Caco-2 (cell line): ENCODE measurements at regions of chr11 and their contacts with region 1.

Region 1: DNA sequence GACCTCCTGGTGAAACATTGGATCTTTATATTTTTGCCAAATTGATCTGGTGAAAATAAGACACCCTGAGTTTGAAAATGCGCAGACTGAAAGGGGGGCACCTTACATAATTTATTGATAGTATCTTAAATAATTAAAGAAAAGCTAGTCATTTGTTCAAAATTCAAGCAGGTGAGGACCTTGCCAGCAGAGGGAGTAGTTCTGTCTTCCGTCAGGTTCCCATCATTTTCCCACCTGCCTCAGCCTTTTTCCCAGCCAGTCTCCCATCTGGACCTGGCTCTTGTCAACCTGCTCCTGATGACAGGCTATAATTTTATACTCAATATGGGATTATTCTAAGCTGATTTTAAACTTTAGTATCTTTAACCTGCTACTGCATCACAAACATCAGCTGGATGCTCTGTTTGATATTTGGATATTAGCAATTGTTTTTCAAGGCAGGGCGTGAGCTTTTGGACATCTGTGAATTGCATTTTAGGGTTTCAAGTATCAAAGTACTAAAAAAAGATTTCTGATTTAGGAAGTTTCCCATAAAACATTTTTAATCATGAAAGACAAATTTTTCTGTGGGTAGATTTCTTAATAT is 132.0 kb downstream of the ELP4 start:
- DNase-seq: peak; percentile 51
- H3K4me3 ChIP-seq: no peak overlapping the region
- H3K4me3 Mint-ChIP-seq: no peak overlapping the region
- H3K27ac Mint-ChIP-seq: no peak overlapping the region
- H3K4me1 ChIP-seq: no peaks in the 10 kb centered on the region
- H3K4me1 Mint-ChIP-seq: no peaks in the 10 kb centered on the region
- H3K27me3 ChIP-seq: no peaks in the 10 kb centered on the region
- H3K27me3 Mint-ChIP-seq: no peaks in the 10 kb centered on the region
- CTCF ChIP-seq: peak; percentile 60 to 66

Region 2: DNA sequence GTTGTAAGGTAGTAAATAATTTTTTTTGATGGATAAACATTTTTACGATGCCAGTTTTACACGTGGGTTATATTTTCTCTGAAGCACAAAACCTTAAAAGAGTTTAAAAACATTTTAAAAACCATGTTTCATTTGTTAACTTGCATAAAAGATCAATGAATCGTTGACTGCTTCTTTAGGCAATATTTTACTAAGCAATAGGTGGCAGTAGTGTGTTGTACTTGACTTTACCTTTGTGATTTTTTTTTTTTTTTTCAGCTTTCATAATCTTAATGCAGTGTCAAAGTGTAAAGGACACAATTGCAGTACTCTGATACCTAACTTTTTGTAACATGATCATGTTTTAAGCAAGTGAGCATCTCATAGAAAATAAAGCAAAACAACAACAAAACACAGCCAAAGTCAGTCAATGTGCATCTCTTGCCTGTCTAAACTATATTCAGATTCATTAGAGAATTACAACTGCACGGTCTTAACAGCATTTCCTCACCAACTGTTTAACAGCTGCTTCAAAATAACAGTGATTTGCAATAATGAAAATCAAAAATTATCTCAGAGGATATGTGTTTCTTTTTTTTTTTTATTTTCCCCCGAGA is 244.2 kb before region 1 on chr11:
- CTCF ChIA-PET with region 1: interaction called, 3 read pairs
- POLR2A ChIA-PET with region 1: no interaction called
- intact Hi-C with region 1: loop called (anchors 1 kb)
- DNase-seq: peak in 1 of 2 experiments; percentile 17
- H3K4me3 ChIP-seq: no peak overlapping the region
- H3K4me3 Mint-ChIP-seq: no peak overlapping the region
- H3K27ac Mint-ChIP-seq: no peak overlapping the region
- H3K4me1 ChIP-seq: no peaks in the 10 kb centered on the region
- H3K4me1 Mint-ChIP-seq: no peaks in the 10 kb centered on the region
- H3K27me3 ChIP-seq: no peaks in the 10 kb centered on the region
- H3K27me3 Mint-ChIP-seq: no peaks in the 10 kb centered on the region
- CTCF ChIP-seq: peak; percentile 51

Region 3: GRCh38 chr11:31582697-31583096 is 58.9 kb before region 1 on chr11:
- CTCF ChIA-PET with region 1: no interaction called
- POLR2A ChIA-PET with region 1: no interaction called
- intact Hi-C with region 1: no loop called
- DNase-seq: no peak
- H3K4me3 ChIP-seq: no peak overlapping the region
- H3K4me3 Mint-ChIP-seq: no peak overlapping the region
- H3K27ac Mint-ChIP-seq: no peak overlapping the region
- H3K4me1 ChIP-seq: no peaks in the 10 kb centered on the region
- H3K4me1 Mint-ChIP-seq: no peaks in the 10 kb centered on the region
- H3K27me3 ChIP-seq: no peaks in the 10 kb centered on the region
- H3K27me3 Mint-ChIP-seq: no peaks in the 10 kb centered on the region
- CTCF ChIP-seq: no peak

Region 4: GRCh38 chr11:31817054-31817620 is 175.6 kb after region 1 on chr11:
- CTCF ChIA-PET with region 1: no interaction called
- POLR2A ChIA-PET with region 1: no interaction called
- intact Hi-C with region 1: loop called (anchors 2 kb)
- DNase-seq: no peak
- H3K4me3 ChIP-seq: peak overlapping the region; percentile 13; the same call in 1 of the 2 replicates
- H3K4me3 Mint-ChIP-seq: peak overlapping the region; percentile 66
- H3K27ac Mint-ChIP-seq: no peak overlapping the region
- H3K4me1 ChIP-seq: peaks cover 20% of the 10 kb centered on the region
- H3K4me1 Mint-ChIP-seq: peaks cover 12% of the 10 kb centered on the region
- H3K27me3 ChIP-seq: peaks cover 20% of the 10 kb centered on the region
- H3K27me3 Mint-ChIP-seq: peaks cover 27% of the 10 kb centered on the region
- CTCF ChIP-seq: no peak

Region 5: DNA sequence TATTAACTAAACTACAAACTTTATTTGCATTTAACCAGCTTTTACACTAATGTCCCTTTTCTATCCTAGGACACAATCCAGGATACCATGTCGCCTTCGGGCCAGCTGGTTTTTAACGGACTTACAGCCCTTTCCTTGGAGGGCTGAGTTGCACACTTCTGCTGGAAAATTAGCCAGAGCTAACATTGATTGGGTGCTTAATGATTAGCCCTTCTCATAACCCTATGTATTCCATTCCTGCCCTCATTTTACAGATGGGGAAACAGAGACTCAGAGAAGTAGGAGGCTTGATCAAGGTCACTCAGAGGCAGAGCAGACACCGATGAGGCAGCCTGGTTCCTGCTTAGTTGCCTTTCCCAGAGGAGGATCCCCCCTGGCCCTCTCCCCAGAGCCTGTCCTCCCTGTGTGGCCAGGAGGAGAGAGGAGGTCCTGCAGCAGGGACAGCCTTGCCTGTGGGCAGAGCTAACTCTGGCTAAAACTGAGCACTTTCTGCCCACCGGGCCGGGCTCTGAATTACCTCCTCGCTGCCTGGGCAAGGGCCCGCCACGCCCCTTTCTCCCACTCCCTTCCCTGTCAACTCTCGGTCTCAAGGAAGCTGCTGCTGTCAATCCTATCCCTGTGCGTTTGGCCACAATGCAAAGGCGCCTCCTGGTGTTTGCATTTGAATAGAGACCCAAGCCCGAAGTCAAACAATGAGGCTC is 229.2 kb after region 1 on chr11:
- CTCF ChIA-PET with region 1: interaction called, 11 read pairs
- POLR2A ChIA-PET with region 1: no interaction called
- intact Hi-C with region 1: loop called (anchors 1 kb)
- DNase-seq: peak; percentile 71 to 75
- H3K4me3 ChIP-seq: no peak overlapping the region
- H3K4me3 Mint-ChIP-seq: no peak overlapping the region
- H3K27ac Mint-ChIP-seq: no peak overlapping the region
- H3K4me1 ChIP-seq: no peaks in the 10 kb centered on the region
- H3K4me1 Mint-ChIP-seq: no peaks in the 10 kb centered on the region
- H3K27me3 ChIP-seq: no peaks in the 10 kb centered on the region
- H3K27me3 Mint-ChIP-seq: peaks cover 17% of the 10 kb centered on the region
- CTCF ChIP-seq: peak; percentile 58 to 90

Region 6: GRCh38 chr11:31958076-31958735 is 316.6 kb after region 1 on chr11:
- CTCF ChIA-PET with region 1: no interaction called
- POLR2A ChIA-PET with region 1: no interaction called
- intact Hi-C with region 1: loop called (anchors 1 kb)
- DNase-seq: peak in 1 of 2 experiments; percentile 30
- H3K4me3 ChIP-seq: no peak overlapping the region
- H3K4me3 Mint-ChIP-seq: no peak overlapping the region
- H3K27ac Mint-ChIP-seq: no peak overlapping the region
- H3K4me1 ChIP-seq: no peaks in the 10 kb centered on the region; the same call in 1 of the 2 replicates
- H3K4me1 Mint-ChIP-seq: peaks cover 6% of the 10 kb centered on the region
- H3K27me3 ChIP-seq: no peaks in the 10 kb centered on the region
- H3K27me3 Mint-ChIP-seq: no peaks in the 10 kb centered on the region
- CTCF ChIP-seq: peak in 1 of 2 experiments; percentile 36

Region 7: GRCh38 chr11:32006799-32007388 is 365.3 kb after region 1 on chr11:
- CTCF ChIA-PET with region 1: interaction called, 4 read pairs
- POLR2A ChIA-PET with region 1: no interaction called
- intact Hi-C with region 1: loop called (anchors 1 kb)
- DNase-seq: peak in 1 of 2 experiments; percentile 44
- H3K4me3 ChIP-seq: no peak overlapping the region
- H3K4me3 Mint-ChIP-seq: no peak overlapping the region
- H3K27ac Mint-ChIP-seq: no peak overlapping the region
- H3K4me1 ChIP-seq: no peaks in the 10 kb centered on the region
- H3K4me1 Mint-ChIP-seq: no peaks in the 10 kb centered on the region
- H3K27me3 ChIP-seq: peaks cover 2% of the 10 kb centered on the region
- H3K27me3 Mint-ChIP-seq: peaks cover 21% of the 10 kb centered on the region
- CTCF ChIP-seq: peak; percentile 34 to 71